Motor neuron (in vitro differentiated cells): ENCODE measurements at regions of chr1 and their contacts with region 1.

Region 1: GRCh38 chr1:94801919-94802546 is 18.1 kb upstream of the SLC44A3 start:
- ATAC-seq: peak; percentile 44 to 94 (median 64)
- H3K4me3 ChIP-seq: no peak overlapping the region
- H3K27ac ChIP-seq: no peak overlapping the region
- H3K4me1 ChIP-seq: peaks cover 14 to 20% of the 10 kb centered on the region in 2 donors

Region 2: GRCh38 chr1:94514095-94514727 is 287.8 kb before region 1 on chr1:
- in situ Hi-C with region 1: loop called in 4 of 9 experiments (anchors 25 kb)
- ATAC-seq: peak in 7 of 8 experiments; percentile 27 to 74 (median 42)
- H3K4me3 ChIP-seq: no peak overlapping the region
- H3K27ac ChIP-seq: no peak overlapping the region
- H3K4me1 ChIP-seq: no peaks in the 10 kb centered on the region

Region 3: GRCh38 chr1:94522304-94522703 is 279.7 kb before region 1 on chr1:
- in situ Hi-C with region 1: loop called in 8 of 9 experiments (anchors 10 to 25 kb)
- ATAC-seq: peak in 7 of 8 experiments; percentile 10 to 52 (median 38)
- H3K4me3 ChIP-seq: no peak overlapping the region
- H3K27ac ChIP-seq: no peak overlapping the region
- H3K4me1 ChIP-seq: no peaks in the 10 kb centered on the region

Region 4: GRCh38 chr1:94541175-94542087 is 260.6 kb before region 1 on chr1 and contains the start of gene F3:
- in situ Hi-C with region 1: loop called in 1 of 9 experiments (anchors 25 kb)
- ATAC-seq: peak; percentile 75 to 97 (median 96)
- H3K4me3 ChIP-seq: peak within 1 kb of the TSS; percentile 47 to 69 (median 50)
- H3K27ac ChIP-seq: peak within 1 kb of the TSS in 1 of 2 donors; percentile 2
- H3K4me1 ChIP-seq: no peaks in the 10 kb centered on the region
- total RNA-seq, gene F3: 1.2 to 265 (median 3.2) TPM

Region 5: GRCh38 chr1:94926915-94927404 is 124.9 kb after region 1 on chr1 and contains the start of gene CNN3:
- in situ Hi-C with region 1: no loop called
- ATAC-seq: peak; percentile 79 to 90 (median 88)
- H3K4me3 ChIP-seq: peak within 1 kb of the TSS; percentile 68 to 97 (median 82)
- H3K27ac ChIP-seq: peak within 1 kb of the TSS; percentile 82 to 84
- H3K4me1 ChIP-seq: peaks cover 31 to 38% of the 10 kb centered on the region in 2 donors
- total RNA-seq, gene CNN3: 48.0 to 479 (median 171) TPM